Heart left ventricle (tissue), 16 donors: ENCODE measurements at regions of chr15 and their contacts with region 1.

Region 1: DNA sequence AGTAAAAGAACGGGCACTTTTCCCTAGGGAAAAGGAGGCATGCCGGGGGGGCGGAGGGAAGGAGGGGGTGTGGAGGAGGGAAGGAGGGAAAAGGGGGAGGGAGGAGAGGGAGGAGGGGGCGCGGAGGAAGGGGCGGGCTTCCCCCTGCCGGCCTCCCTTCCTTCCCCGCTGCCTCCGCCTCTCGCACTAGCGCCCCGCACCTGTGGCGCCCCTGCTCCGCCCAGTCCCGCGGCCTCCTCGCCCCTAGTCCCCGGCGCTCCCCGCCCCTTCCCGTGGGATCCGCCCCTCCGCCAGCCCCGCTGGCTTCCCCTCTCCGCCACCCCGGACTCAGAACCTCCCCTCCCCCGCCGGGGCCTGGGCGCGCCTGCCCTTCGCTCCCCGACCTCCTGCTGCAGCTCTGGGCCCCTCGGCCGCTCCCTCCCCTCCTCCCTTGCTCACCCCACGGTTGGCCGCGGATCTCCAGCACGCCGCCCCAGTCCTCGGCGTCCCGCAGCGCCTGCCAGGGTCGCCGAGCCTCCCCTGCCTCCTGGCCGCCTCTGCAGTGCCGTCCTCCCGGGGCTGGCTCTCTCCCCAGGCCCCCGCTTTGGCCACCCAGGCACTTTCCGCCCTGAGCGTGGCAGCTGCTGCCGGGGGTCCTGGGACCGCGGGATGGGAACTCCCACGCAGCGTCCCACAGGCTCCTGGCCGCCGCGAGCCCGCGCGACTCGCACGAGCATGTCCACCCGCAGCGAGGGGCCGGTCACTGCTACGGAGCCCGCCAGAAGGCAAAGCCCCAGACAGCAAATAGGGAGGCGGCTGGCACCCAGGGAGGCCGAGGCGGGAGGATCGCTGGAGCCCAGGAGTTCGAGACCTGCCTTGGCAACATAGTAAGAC is 147.4 kb downstream of the TJP1 start:
- DNase-seq: peak; percentile 35 to 73 (median 45)
- ATAC-seq: peak in 3 of 4 donors; percentile 55 to 78 (median 72)
- H3K4me3 ChIP-seq: peak overlapping the region; percentile 46 to 64 (median 58)
- H3K27ac ChIP-seq: no peak overlapping the region
- H3K4me1 ChIP-seq: peaks cover 0 to 13% (median 0%) of the 10 kb centered on the region in 12 donors
- H3K27me3 ChIP-seq: peaks cover 0 to 20% (median 0%) of the 10 kb centered on the region in 9 donors
- CTCF ChIP-seq: no peak
- POLR2A ChIP-seq: no peak

Region 2: GRCh38 chr15:29935276-29936020 is 260.6 kb after region 1 on chr15:
- intact Hi-C with region 1: loop called in 3 of 10 experiments (anchors 5 to 10 kb)
- DNase-seq: no peak
- ATAC-seq: peak in 3 of 4 donors; percentile 70 to 81 (median 73)
- H3K4me3 ChIP-seq: no peak overlapping the region
- H3K27ac ChIP-seq: no peak overlapping the region
- H3K4me1 ChIP-seq: peaks cover 0 to 6% (median 0%) of the 10 kb centered on the region in 12 donors
- H3K27me3 ChIP-seq: no peaks in the 10 kb centered on the region
- CTCF ChIP-seq: peak in 9 of 12 donors; percentile 7 to 49 (median 32)
- POLR2A ChIP-seq: no peak